Posterior vena cava (tissue), 2 donors: ENCODE measurements at regions of chr11 and their contacts with region 1.

Region 1: DNA sequence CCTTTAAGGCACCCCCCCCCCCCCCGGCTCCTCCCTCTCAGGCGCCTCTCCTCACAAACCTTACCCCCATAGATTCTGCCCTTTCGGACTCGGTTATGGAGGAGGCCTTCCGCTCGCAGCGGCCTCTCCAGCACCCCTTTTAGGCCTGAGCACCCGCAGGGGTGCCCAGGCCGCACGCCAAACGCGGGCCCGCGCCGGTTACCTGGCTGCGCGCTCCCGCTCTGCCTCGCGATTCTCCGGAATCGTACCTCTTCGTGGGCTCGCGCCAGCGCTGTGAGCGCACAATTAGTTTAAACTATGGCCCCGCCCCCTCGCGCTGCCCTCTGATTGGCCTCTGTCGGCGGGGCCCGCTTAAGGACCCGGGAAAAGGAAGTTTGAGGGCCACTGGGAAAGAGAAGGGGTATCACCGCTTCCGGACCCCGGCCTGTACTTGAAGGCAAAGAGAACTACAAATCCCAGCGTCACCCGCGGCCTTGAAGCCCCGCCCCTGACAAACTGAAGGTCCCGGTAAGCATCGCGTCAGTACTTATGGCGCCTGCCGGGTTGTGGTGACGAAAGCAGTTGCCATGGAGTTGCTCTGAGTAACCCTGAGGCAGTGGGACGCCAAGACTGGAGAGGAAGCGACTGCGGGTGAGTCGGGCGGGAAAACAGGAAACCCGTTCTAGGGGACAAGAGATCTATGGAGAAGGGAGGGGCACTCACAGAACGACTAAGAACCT is at the starts of genes LRRC51 and NUMA1:
- DNase-seq: peak; percentile 100
- total RNA-seq, gene LRRC51: 6.0 to 6.9 TPM
- total RNA-seq, gene NUMA1: 129 to 143 TPM

Region 2: GRCh38 chr11:72038491-72038890 is 41.9 kb before region 1 on chr11:
- intact Hi-C with region 1: loop called in 1 of 2 experiments (anchors 5 kb)
- DNase-seq: peak; percentile 84

Region 3: DNA sequence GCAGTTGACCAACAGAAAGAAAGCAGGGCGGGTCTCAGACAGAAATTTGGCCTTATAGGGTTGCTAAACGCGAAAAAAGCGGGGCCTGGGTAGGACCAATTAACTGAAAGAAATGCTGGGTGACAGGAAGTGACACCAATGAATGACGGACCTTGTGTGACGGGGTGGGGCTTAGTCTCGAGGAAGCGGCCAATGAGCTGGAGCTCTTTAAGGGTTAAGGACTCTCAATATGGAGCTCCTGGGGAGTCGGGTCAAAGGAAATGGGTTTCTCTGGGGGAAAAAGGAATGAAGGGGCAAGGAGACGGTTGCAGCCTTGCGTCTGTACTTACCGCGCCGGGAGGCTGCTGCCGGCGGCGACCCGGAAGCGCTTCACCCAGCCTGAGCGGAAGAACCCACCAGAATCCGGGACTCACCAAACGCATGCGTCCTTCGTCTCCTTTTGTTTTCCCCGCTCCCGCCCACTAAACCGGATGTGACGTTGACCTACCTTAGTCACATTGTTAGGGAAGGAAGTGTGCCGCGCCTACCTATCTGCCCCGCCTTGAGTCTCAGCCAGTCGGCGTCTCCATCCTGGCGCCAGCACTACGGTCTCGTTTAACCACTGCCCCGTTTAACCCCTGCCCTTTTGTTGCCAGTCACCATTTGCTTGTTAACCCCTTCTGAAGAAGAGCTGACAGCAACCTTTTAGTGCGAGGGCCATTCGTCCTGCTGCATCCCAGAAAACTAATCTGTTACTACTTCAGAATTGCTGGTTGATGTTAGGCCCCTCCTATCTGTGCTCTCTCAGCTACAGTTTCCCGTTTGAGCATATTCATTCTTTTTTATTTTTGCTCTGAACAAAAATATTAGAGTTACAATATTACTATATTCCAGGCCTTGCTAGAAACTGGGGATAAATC is 32.2 kb after region 1 on chr11 and contains the start of gene ANAPC15:
- intact Hi-C with region 1: no loop called
- DNase-seq: peak; percentile 99
- total RNA-seq, gene ANAPC15: 34.6 to 35.8 TPM